Aorta (tissue), 5 donors: ENCODE measurements at regions of chr3 and their contacts with region 1.

Region 1: GRCh38 chr3:128426128-128426921 is 40.4 kb downstream of the DNAJB8 start:
- DNase-seq: no peak
- ATAC-seq: peak; percentile 90
- H3K4me3 ChIP-seq: no peak overlapping the region
- H3K27ac ChIP-seq: no peak overlapping the region
- H3K4me1 ChIP-seq: no peaks in the 10 kb centered on the region
- H3K27me3 ChIP-seq: no peaks in the 10 kb centered on the region

Region 2: DNA sequence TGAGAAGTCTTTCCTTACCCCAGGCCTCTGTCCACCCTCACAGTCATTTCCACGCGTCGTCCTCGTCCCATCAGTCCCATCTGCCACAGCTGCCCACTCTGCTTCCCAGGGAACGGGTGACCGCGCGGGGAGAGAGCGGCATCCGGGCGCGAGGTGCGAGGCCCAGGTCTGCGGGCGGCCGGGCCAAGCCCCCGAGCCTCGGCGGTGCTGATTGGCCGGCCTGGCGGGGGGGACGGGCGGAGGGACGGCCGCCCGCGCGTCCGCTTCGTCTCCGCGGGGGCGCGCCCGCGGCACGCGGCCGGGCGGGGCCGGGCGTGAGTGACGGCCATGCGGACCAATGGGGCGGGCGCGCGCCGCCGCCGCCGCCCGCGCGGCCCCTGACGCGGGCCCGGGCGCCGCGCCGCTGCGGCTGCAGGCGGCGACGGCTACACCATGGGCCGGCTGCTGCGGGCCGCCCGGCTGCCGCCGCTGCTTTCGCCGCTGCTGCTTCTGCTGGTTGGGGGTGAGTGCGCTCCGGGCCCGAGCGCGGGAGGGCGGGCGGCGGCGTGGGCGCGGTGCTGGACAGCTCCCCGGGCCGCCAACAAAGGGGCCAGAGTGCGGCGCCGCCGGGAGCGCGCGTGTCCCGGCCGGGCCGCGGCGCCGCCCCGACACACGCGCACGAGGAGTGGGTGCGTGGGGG is 797.4 kb before region 1 on chr3 and contains the start of gene PODXL2:
- intact Hi-C with region 1: no loop called
- DNase-seq: peak; percentile 64 to 86
- ATAC-seq: peak; percentile 66
- H3K4me3 ChIP-seq: peak within 1 kb of the TSS; percentile 21 to 70
- H3K27ac ChIP-seq: no peak within 1 kb of the TSS
- H3K4me1 ChIP-seq: no peaks in the 10 kb centered on the region
- H3K27me3 ChIP-seq: no peaks in the 10 kb centered on the region
- total RNA-seq, gene PODXL2: 2.2 to 4.0 TPM

Region 3: DNA sequence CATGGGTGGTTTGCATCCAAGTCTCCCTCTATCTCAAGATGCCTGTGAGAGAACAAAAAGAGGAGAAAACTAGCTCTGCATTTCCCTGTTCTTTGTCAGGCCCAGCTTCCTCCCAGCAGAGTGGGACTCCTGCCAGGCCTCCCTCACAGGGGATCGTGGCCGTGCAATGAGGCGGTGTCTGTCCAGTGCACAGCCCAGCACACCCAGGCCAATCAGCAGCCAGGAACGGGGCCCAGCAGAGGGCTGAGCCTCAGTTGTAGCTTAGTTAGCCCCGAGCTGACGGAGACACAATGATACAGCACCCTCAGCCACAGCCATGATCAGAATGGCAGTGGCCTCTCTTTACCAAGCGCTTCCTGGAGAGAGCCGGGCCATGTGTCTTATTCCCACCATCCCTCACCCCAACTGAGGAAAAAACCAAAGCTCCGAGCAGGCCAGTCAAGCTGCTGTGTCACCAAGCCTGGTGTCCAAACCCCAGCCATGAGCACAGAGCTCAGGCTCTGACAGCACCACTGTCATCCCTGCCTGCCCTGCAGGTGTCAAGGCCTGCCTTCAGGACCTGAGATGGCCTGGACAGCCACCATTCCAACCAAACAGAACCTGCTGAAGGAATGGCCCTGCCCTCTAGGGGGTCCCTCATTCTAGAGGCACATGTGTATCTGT is 30.7 kb before region 1 on chr3:
- intact Hi-C with region 1: no loop called
- DNase-seq: peak in 1 of 2 donors; percentile 70
- ATAC-seq: peak; percentile 63
- H3K4me3 ChIP-seq: no peak overlapping the region
- H3K27ac ChIP-seq: no peak overlapping the region
- H3K4me1 ChIP-seq: no peaks in the 10 kb centered on the region
- H3K27me3 ChIP-seq: no peaks in the 10 kb centered on the region

Region 4: GRCh38 chr3:128497387-128498126 is 71.2 kb after region 1 on chr3:
- intact Hi-C with region 1: loop called (anchors 2 kb)
- DNase-seq: peak in 1 of 2 donors; percentile 90
- ATAC-seq: peak; percentile 63
- H3K4me3 ChIP-seq: peak overlapping the region; percentile 32 to 77
- H3K27ac ChIP-seq: no peak overlapping the region
- H3K4me1 ChIP-seq: no peaks in the 10 kb centered on the region
- H3K27me3 ChIP-seq: no peaks in the 10 kb centered on the region

Region 5: DNA sequence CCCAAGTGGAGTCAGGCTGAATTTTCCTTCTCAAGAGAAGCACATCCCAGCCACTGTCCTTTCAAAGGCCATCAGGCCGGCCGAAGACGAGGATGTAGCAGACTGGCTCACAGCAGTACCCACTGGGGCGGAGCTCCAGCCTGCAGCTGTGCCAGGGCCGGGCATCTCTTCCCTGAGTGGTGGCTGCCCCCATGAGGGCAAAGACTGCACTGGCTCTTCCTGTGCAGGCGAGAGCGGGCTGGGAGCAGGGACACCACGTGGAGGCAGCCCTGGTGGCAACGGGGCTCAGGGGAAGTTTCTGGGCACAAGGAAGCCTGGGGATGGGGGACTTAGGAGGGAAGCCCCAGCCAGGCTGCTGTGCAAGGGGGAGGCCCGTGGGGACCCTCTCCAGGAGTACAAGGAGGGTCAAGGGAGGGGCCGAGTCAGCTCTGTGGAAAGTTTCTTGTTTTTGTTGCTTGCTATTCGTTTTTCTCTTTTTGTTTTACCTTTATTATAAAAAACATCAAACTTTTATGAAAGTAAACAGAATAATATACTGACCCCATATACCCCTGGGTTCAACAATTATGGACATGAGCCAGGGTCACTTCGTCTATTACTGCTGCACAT is 158.2 kb after region 1 on chr3:
- intact Hi-C with region 1: loop called in 1 of 2 experiments (anchors 2 kb)
- DNase-seq: peak; percentile 79 to 90
- ATAC-seq: peak; percentile 92
- H3K4me3 ChIP-seq: no peak overlapping the region
- H3K27ac ChIP-seq: no peak overlapping the region
- H3K4me1 ChIP-seq: no peaks in the 10 kb centered on the region
- H3K27me3 ChIP-seq: no peaks in the 10 kb centered on the region

Region 6: GRCh38 chr3:128603811-128604775 is 177.8 kb after region 1 on chr3:
- intact Hi-C with region 1: loop called (anchors 1 to 2 kb)
- DNase-seq: no peak
- ATAC-seq: no peak
- H3K4me3 ChIP-seq: no peak overlapping the region
- H3K27ac ChIP-seq: no peak overlapping the region
- H3K4me1 ChIP-seq: no peaks in the 10 kb centered on the region
- H3K27me3 ChIP-seq: no peaks in the 10 kb centered on the region